CD4-positive, alpha-beta memory T cell (primary cell): ENCODE measurements at regions of chr3 and their contacts with region 1.

Region 1: GRCh38 chr3:98166396-98166795 is at the start of gene OR5H15:
- DNase-seq: no peak
- H3K4me3 ChIP-seq: no peak within 1 kb of the TSS
- H3K4me3 Mint-ChIP-seq: no peak within 1 kb of the TSS
- H3K27ac ChIP-seq: no peak within 1 kb of the TSS
- H3K27ac Mint-ChIP-seq: no peak within 1 kb of the TSS
- H3K4me1 ChIP-seq: no peaks in the 10 kb centered on the region
- H3K4me1 Mint-ChIP-seq: no peaks in the 10 kb centered on the region
- H3K27me3 ChIP-seq: no peaks in the 10 kb centered on the region
- H3K27me3 Mint-ChIP-seq: peaks cover 2 to 4% of the 10 kb centered on the region in 2 donors
- total RNA-seq, gene OR5H15: not detected

Region 2: GRCh38 chr3:98185180-98185579 is 18.8 kb after region 1 on chr3:
- CTCF ChIA-PET with region 1: no interaction called
- POLR2A ChIA-PET with region 1: no interaction called
- intact Hi-C with region 1: no loop called
- DNase-seq: no peak
- H3K4me3 ChIP-seq: no peak overlapping the region
- H3K4me3 Mint-ChIP-seq: no peak overlapping the region
- H3K27ac ChIP-seq: no peak overlapping the region
- H3K27ac Mint-ChIP-seq: no peak overlapping the region
- H3K4me1 ChIP-seq: no peaks in the 10 kb centered on the region
- H3K4me1 Mint-ChIP-seq: peaks cover 0 to 7% (median 2%) of the 10 kb centered on the region in 4 donors
- H3K27me3 ChIP-seq: no peaks in the 10 kb centered on the region
- H3K27me3 Mint-ChIP-seq: no peaks in the 10 kb centered on the region

Region 3: DNA sequence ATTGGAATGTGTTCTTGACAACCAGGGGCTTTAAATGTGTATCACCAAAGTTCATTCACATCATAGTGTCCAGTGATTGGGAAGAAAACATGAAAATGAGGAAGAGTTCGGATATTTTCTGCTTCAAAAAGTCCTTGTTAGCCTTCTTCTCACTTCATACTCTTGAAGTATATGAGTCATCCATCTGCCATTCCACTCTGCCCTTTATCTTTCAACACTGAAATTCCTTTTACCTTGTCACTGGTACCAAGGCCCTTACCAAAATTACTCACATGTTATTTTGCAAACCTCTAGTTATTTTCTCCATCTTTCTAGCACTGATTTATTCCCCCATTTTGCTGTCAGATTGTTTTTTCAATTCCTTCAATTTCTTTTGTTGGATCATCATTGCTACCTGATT is 32.6 kb after region 1 on chr3:
- CTCF ChIA-PET with region 1: no interaction called
- POLR2A ChIA-PET with region 1: no interaction called
- intact Hi-C with region 1: loop called (anchors 1 kb)
- DNase-seq: no peak
- H3K4me3 ChIP-seq: no peak overlapping the region
- H3K4me3 Mint-ChIP-seq: no peak overlapping the region
- H3K27ac ChIP-seq: no peak overlapping the region
- H3K27ac Mint-ChIP-seq: no peak overlapping the region
- H3K4me1 ChIP-seq: no peaks in the 10 kb centered on the region
- H3K4me1 Mint-ChIP-seq: no peaks in the 10 kb centered on the region
- H3K27me3 ChIP-seq: no peaks in the 10 kb centered on the region
- H3K27me3 Mint-ChIP-seq: peaks cover 0 to 4% of the 10 kb centered on the region in 2 donors